Activated T-helper 2 cell treated with anti-CD3 and anti-CD28 coated beads, Interferon-gamma antibody, Interleukin-2, Interleukin-4, amounts not matched to agents 10 μg/mL and 5 μg/mL and 100 μg/mL, durations not matched to agents 14 hours and 24 hours and 36 hours (primary cell): ENCODE measurements at regions of chr7 and their contacts with region 1.

Region 1: DNA sequence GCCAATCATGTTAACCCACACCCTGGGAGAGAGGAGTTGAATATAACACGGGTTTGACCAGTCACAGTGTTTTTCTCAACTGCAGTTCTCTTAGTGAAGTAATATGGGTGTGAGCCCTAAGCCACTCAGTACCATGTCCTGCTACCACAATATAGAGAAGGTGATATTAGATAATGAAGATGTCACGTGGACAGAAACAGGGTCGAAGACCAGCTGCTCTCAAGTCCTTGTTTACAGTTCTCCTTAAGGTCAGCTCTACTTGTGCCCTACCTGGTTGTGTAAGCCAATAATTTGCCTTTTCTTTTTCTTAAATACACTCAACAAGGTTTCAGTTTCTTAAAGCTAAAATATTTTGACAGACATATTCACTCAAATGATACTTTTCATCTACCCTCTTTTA is 128.3 kb upstream of the POT1 start:
- DNase-seq: no peak
- H3K4me3 Mint-ChIP-seq: no peak overlapping the region
- H3K27ac Mint-ChIP-seq: no peak overlapping the region
- H3K4me1 Mint-ChIP-seq: no peaks in the 10 kb centered on the region
- H3K27me3 Mint-ChIP-seq: no peaks in the 10 kb centered on the region

Region 2: DNA sequence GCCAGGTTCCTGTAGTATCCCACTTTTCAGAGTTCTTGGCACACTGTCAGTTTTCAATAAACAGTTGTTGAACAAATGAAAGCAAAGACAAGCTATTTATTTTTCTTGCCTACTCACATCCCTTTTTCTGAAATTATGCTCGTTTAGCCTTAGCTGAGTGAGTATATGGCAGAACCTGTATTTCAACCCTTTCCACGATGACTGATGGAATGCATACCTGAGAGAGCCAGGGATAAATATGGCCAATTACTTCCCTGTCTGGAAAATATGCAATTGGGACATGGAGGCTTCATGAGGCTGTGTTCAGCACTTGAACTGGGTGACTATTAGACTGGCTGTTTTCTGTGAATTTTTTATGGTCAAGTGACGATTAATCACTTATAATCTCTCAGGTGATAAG is 16.2 kb after region 1 on chr7:
- intact Hi-C with region 1: loop called (anchors 2 kb)
- DNase-seq: no peak
- H3K4me3 Mint-ChIP-seq: no peak overlapping the region
- H3K27ac Mint-ChIP-seq: no peak overlapping the region
- H3K4me1 Mint-ChIP-seq: no peaks in the 10 kb centered on the region
- H3K27me3 Mint-ChIP-seq: no peaks in the 10 kb centered on the region

Region 3: DNA sequence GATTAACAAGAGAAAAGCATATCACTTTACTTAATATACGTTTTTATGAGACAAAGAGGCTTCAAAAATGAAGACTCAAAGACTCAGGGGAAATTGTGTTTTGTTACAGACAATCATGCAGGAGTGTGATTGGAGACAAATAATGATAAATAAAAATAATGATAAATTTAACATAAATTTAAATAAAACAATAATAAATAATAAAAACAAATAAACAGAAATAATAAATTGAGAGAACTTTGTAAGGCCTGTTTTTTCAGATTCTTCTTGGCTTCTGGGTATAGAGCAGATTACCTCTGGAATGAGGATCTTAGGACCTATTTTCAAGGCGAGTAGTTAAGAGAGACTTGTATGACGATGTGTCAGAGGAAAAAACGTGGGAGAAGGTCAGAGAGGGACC is 143.0 kb after region 1 on chr7:
- intact Hi-C with region 1: no loop called
- DNase-seq: no peak
- H3K4me3 Mint-ChIP-seq: no peak overlapping the region
- H3K27ac Mint-ChIP-seq: no peak overlapping the region
- H3K4me1 Mint-ChIP-seq: no peaks in the 10 kb centered on the region
- H3K27me3 Mint-ChIP-seq: no peaks in the 10 kb centered on the region